Cardiac septum (tissue), 1 donor: ENCODE measurements at regions of chr7 and their contacts with region 1.

Region 1: GRCh38 chr7:129224251-129225205 is at the start of gene AHCYL2:
- DNase-seq: peak; percentile 99
- total RNA-seq, gene AHCYL2: 5.9 TPM

Region 2: GRCh38 chr7:129611246-129612111 is 387.0 kb after region 1 on chr7 and contains the start of gene NRF1:
- intact Hi-C with region 1: loop called (anchors 10 kb)
- DNase-seq: peak; percentile 96
- total RNA-seq, gene NRF1: 17.0 TPM